PC-9 (cell line): ENCODE measurements at regions of chr12 and their contacts with region 1.

Region 1: GRCh38 chr12:131901431-131902331 is 7.3 kb downstream of the ULK1 start:
- DNase-seq: peak in 1 of 2 experiments; percentile 75
- H3K4me3 ChIP-seq: no peak overlapping the region
- H3K27ac ChIP-seq: no peak overlapping the region
- H3K4me1 ChIP-seq: peaks cover 13% of the 10 kb centered on the region
- H3K27me3 ChIP-seq: no peaks in the 10 kb centered on the region
- CTCF ChIP-seq: no peak

Region 2: DNA sequence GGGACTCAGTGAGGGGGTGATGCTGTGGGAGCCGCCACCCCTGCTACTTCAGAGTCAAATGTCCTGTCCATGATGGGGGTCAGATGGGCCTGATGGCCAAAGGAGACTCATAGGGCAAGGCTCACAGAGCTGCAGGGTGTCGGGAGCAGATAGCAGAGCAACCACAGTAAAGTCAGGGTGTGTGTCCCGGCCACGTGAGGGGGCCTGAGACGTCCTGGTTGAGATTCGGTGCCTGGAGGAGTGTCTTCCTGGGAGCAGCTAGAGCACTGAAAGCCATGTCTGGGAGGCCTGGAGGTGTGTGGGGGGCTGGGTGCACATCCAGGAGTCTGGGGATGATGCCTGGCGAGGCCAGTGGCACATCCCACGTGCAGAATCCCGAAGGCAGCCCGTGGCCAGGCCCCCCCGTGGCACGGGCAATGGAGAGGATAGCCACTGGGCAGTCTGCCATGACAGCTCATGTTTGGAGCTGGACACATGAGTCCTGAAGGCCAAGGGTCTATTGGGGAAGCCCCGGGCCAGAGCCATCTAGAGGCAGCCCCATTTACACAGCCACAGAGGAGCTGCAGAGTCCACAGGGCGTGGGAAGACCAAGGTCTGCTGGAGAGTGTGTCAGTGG is 498.8 kb before region 1 on chr12:
- CTCF ChIA-PET with region 1: no interaction called
- POLR2A ChIA-PET with region 1: no interaction called
- intact Hi-C with region 1: no loop called
- DNase-seq: no peak
- H3K4me3 ChIP-seq: no peak overlapping the region
- H3K27ac ChIP-seq: no peak overlapping the region
- H3K4me1 ChIP-seq: no peaks in the 10 kb centered on the region
- H3K27me3 ChIP-seq: peaks cover 13% of the 10 kb centered on the region; the same call in 1 of the 2 replicates
- CTCF ChIP-seq: no peak

Region 3: DNA sequence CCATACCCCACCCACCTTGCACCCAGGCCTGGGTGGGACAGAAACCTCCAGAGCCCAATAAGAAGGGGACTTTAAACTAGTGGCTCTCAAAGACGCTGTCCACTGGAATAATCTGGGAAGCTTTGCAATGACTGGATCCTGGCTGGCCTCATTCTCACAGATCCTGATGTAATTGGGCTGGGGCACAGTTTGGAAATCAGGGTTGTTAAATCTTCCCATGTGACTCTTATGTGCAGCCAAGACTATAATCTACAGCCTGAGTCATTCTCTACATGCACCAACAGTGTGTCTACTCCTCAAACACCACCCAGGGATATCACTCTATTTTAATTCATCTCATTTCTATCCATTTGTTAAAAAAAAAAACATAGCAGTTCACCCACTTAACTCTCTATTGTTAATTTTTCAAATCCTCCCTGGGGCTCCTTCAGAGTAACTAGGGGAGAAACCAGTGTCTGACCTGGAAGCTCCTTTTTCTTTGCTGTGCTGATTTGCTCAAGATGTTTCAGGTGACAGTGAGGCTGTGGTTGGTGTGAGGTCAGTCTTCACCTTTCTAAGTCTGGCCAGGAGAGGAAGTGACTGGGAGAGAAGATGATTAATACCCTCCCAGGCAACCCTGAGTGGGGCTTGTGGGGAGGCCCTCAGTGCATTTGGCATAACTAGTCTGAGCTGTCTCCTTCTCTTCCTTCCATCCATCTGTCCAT is 402.4 kb before region 1 on chr12:
- CTCF ChIA-PET with region 1: no interaction called
- POLR2A ChIA-PET with region 1: no interaction called
- intact Hi-C with region 1: no loop called
- DNase-seq: no peak
- H3K4me3 ChIP-seq: no peak overlapping the region
- H3K27ac ChIP-seq: no peak overlapping the region
- H3K4me1 ChIP-seq: no peaks in the 10 kb centered on the region
- H3K27me3 ChIP-seq: peaks cover 69% of the 10 kb centered on the region
- CTCF ChIP-seq: no peak

Region 4: GRCh38 chr12:131849700-131850553 is 51.8 kb before region 1 on chr12:
- CTCF ChIA-PET with region 1: no interaction called
- POLR2A ChIA-PET with region 1: no interaction called
- intact Hi-C with region 1: no loop called
- DNase-seq: no peak
- H3K4me3 ChIP-seq: no peak overlapping the region
- H3K27ac ChIP-seq: no peak overlapping the region
- H3K4me1 ChIP-seq: 0 out of 2 replicates have a peak, but pooled peaks cover 3% of the 10 kb centered on the region
- H3K27me3 ChIP-seq: peaks cover 3% of the 10 kb centered on the region; the same call in 1 of the 2 replicates
- CTCF ChIP-seq: no peak

Region 5: DNA sequence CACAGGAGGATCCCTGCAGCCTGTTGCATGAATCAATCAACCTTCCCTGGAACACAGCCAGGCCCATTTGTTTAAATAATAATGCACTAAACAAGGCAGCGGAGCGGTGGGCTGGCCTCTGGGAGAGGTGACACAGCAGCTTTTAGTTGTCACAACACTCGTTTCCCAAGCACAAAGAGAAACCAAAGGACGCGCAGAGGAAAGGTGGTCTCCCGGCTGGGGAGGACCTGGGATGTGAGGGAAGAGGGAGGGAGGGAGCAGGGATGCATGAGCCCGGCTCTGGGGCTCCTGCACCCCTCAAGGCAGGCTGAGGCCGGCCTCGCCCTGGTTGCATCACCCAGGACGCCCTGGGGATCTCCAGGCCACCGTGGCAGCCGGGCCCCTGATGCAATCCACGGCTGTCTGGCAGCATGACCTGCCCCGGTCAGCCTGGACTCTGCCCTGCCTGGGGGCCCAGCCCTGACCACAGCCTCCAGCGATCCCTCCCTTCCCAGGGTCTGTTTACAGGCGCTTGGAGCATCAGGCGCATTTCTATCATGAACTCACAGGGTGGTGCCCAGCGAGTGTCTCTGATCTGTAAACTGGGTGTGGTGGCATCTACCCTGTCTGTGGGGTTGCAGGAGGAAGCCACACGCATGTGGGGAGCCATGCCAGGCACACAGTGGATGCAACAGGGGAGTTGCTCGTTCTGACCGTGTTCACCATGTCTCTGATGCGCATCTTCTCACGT is 41.0 kb before region 1 on chr12:
- CTCF ChIA-PET with region 1: no interaction called
- POLR2A ChIA-PET with region 1: no interaction called
- intact Hi-C with region 1: loop called (anchors 1 kb)
- DNase-seq: peak; percentile 94 to 95
- H3K4me3 ChIP-seq: peak overlapping the region; percentile 43; the same call in 1 of the 2 replicates
- H3K27ac ChIP-seq: peak overlapping the region; percentile 94
- H3K4me1 ChIP-seq: peaks cover 74% of the 10 kb centered on the region
- H3K27me3 ChIP-seq: no peaks in the 10 kb centered on the region
- CTCF ChIP-seq: no peak

Region 6: GRCh38 chr12:131912518-131913294 is 11.0 kb after region 1 on chr12:
- CTCF ChIA-PET with region 1: no interaction called
- POLR2A ChIA-PET with region 1: no interaction called
- intact Hi-C with region 1: loop called (anchors 1 kb)
- DNase-seq: peak in 1 of 2 experiments; percentile 74
- H3K4me3 ChIP-seq: no peak overlapping the region
- H3K27ac ChIP-seq: no peak overlapping the region
- H3K4me1 ChIP-seq: no peaks in the 10 kb centered on the region
- H3K27me3 ChIP-seq: no peaks in the 10 kb centered on the region
- CTCF ChIP-seq: no peak; the same call in 1 of the 2 replicates